Naive thymus-derived CD4-positive, alpha-beta T cell (primary cell): ENCODE measurements at regions of chr12 and their contacts with region 1.

Region 1: GRCh38 chr12:92408072-92408900 is 262.6 kb upstream of the BTG1 start:
- DNase-seq: peak in 3 of 9 donors; percentile 29 to 40 (median 30)
- ATAC-seq: peak; percentile 34
- H3K4me3 ChIP-seq: no peak overlapping the region
- H3K4me3 Mint-ChIP-seq: peak overlapping the region in 4 of 10 donors; percentile 18 to 58 (median 28)
- H3K27ac ChIP-seq: no peak overlapping the region
- H3K27ac Mint-ChIP-seq: peak overlapping the region in 8 of 9 donors; percentile 30 to 89 (median 72)
- H3K4me1 ChIP-seq: peaks cover 30 to 33% of the 10 kb centered on the region in 2 donors
- H3K4me1 Mint-ChIP-seq: peaks cover 21 to 80% (median 67%) of the 10 kb centered on the region in 7 donors
- H3K27me3 ChIP-seq: no peaks in the 10 kb centered on the region
- H3K27me3 Mint-ChIP-seq: no peaks in the 10 kb centered on the region

Region 2: GRCh38 chr12:91811481-91812287 is 596.6 kb before region 1 on chr12:
- CTCF ChIA-PET with region 1: no interaction called
- POLR2A ChIA-PET with region 1: no interaction called
- intact Hi-C with region 1: loop called in 1 of 2 experiments (anchors 10 kb)
- DNase-seq: peak; percentile 64 to 79 (median 70)
- ATAC-seq: peak; percentile 90
- H3K4me3 ChIP-seq: peak overlapping the region; percentile 37
- H3K4me3 Mint-ChIP-seq: peak overlapping the region in 9 of 10 donors; percentile 31 to 80 (median 52)
- H3K27ac ChIP-seq: peak overlapping the region; percentile 22
- H3K27ac Mint-ChIP-seq: peak overlapping the region in 8 of 9 donors; percentile 81 to 97 (median 86)
- H3K4me1 ChIP-seq: peaks cover 0 to 15% of the 10 kb centered on the region in 2 donors
- H3K4me1 Mint-ChIP-seq: peaks cover 10 to 48% (median 35%) of the 10 kb centered on the region in 7 donors
- H3K27me3 ChIP-seq: no peaks in the 10 kb centered on the region
- H3K27me3 Mint-ChIP-seq: no peaks in the 10 kb centered on the region

Region 3: DNA sequence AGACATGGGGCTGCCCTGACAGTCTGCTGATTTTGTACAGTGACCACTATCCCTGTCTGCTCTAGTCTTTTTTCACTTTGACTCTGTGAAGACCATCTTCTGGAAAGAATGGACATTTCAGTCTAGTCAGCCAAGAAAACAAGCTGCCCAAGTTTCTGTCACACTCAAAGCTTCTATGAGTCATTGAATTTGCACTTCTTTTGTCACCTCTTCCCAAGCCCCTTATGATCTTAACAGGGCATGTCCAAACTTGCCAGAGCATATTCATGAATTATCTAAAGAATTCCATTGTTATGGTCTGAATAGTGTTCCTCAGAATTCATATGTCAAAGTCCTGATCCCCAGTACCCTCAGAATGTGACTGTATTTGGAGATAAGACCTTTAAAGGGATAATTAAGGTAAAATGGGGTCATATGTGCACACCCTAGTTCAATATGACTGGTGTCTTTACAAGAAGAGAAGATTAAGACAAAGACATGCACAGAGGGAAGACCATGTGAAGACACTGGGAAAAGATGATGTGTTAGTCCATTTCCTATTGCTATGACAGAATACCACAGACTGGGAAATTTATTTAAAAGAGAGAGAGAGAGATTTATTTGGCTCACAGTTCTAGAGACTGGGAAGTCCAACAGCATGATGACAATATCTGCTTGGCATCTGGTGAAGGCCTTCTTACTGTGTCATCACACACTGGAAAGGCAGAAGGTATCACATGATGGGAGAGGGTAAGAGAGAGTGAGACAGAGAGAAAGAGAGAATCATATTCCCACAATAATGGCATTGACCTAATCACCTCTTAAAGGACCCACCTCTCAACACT is 505.2 kb before region 1 on chr12:
- CTCF ChIA-PET with region 1: no interaction called
- POLR2A ChIA-PET with region 1: no interaction called
- intact Hi-C with region 1: no loop called
- DNase-seq: no peak
- ATAC-seq: no peak
- H3K4me3 ChIP-seq: no peak overlapping the region
- H3K4me3 Mint-ChIP-seq: no peak overlapping the region
- H3K27ac ChIP-seq: no peak overlapping the region
- H3K27ac Mint-ChIP-seq: peak overlapping the region in 4 of 9 donors; percentile 20 to 31 (median 24)
- H3K4me1 ChIP-seq: no peaks in the 10 kb centered on the region
- H3K4me1 Mint-ChIP-seq: peaks cover 2 to 52% (median 37%) of the 10 kb centered on the region in 7 donors
- H3K27me3 ChIP-seq: no peaks in the 10 kb centered on the region
- H3K27me3 Mint-ChIP-seq: no peaks in the 10 kb centered on the region

Region 4: DNA sequence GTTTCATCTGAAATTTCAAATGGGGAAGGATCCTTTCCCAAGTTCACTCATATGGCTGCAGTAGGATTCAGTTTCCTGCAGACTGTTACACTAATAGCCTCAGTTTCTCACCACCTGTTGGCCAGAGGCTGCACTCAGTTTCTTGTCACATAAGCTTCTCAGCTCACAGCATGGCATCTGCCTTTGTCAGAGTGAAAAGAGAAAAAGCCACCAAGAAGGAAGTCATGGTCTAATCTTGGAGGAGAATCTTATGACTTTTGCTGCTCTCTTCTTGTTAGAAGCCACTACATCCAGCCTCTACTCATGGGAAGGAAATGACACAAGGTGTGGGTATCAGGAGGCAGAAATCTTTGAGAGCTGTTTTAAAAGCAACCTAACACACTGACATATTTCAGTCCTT is 223.2 kb before region 1 on chr12:
- CTCF ChIA-PET with region 1: no interaction called
- POLR2A ChIA-PET with region 1: no interaction called
- intact Hi-C with region 1: loop called in 1 of 2 experiments (anchors 1 kb)
- DNase-seq: peak in 8 of 9 donors; percentile 30 to 70 (median 56)
- ATAC-seq: peak; percentile 88
- H3K4me3 ChIP-seq: no peak overlapping the region
- H3K4me3 Mint-ChIP-seq: peak overlapping the region; percentile 28 to 77 (median 68)
- H3K27ac ChIP-seq: peak overlapping the region; percentile 74
- H3K27ac Mint-ChIP-seq: peak overlapping the region; percentile 83 to 96 (median 93)
- H3K4me1 ChIP-seq: peaks cover 22 to 29% of the 10 kb centered on the region in 2 donors
- H3K4me1 Mint-ChIP-seq: peaks cover 23 to 71% (median 60%) of the 10 kb centered on the region in 7 donors
- H3K27me3 ChIP-seq: no peaks in the 10 kb centered on the region
- H3K27me3 Mint-ChIP-seq: no peaks in the 10 kb centered on the region

Region 5: DNA sequence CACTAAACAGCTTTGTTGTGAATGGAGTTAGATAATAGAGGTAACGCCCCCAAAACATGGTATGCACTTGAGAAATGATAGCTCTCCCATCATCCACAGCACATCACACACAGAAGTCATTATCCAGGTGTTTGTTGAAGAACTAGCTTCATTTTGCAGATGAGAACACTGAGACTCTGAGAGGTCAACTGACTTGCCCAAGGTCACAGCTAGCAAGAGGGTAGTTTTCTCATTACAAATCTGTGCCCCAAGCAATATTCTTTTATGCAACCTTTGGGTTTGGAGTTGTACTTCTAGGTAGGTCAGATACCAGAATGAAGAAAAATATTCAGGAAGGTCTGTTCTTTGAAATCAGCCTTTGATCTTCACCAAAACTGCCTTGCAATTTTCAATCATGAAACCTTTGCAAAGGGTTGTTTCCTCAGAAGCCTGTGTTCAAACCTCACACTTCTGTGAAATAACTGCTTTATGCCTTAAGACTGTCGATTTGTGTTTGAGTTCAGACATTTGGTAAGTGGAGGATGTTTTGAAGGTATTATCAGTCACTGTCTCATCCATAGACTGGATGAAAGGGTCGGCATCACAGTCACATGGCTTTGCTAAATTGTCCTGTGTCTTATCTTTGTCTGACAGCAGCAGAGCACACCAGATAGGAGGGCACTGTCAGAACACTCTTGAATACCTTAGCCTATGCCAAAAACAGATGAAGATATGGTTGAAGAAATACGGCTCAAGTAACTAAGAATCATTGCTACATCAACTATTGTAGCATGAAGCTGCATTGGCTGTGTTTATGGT is 29.4 kb before region 1 on chr12:
- CTCF ChIA-PET with region 1: interaction called, 4 read pairs
- POLR2A ChIA-PET with region 1: interaction called, 14 read pairs
- intact Hi-C with region 1: loop called in 1 of 2 experiments (anchors 1 kb)
- DNase-seq: peak in 7 of 9 donors; percentile 44 to 73 (median 65)
- ATAC-seq: peak; percentile 90
- H3K4me3 ChIP-seq: no peak overlapping the region
- H3K4me3 Mint-ChIP-seq: peak overlapping the region; percentile 8 to 74 (median 62)
- H3K27ac ChIP-seq: peak overlapping the region; percentile 64
- H3K27ac Mint-ChIP-seq: peak overlapping the region; percentile 87 to 96 (median 93)
- H3K4me1 ChIP-seq: peaks cover 8 to 52% of the 10 kb centered on the region in 2 donors
- H3K4me1 Mint-ChIP-seq: peaks cover 31 to 91% (median 87%) of the 10 kb centered on the region in 7 donors
- H3K27me3 ChIP-seq: no peaks in the 10 kb centered on the region
- H3K27me3 Mint-ChIP-seq: no peaks in the 10 kb centered on the region

Region 6: GRCh38 chr12:92505254-92506231 is 97.3 kb after region 1 on chr12:
- CTCF ChIA-PET with region 1: interaction called, 3 read pairs
- POLR2A ChIA-PET with region 1: interaction called, 15 read pairs
- intact Hi-C with region 1: no loop called
- DNase-seq: peak; percentile 11 to 71 (median 50)
- ATAC-seq: peak; percentile 66
- H3K4me3 ChIP-seq: peak overlapping the region; percentile 48
- H3K4me3 Mint-ChIP-seq: peak overlapping the region; percentile 80 to 93 (median 87)
- H3K27ac ChIP-seq: peak overlapping the region; percentile 73
- H3K27ac Mint-ChIP-seq: peak overlapping the region; percentile 89 to 99 (median 96)
- H3K4me1 ChIP-seq: peaks cover 17 to 28% of the 10 kb centered on the region in 2 donors
- H3K4me1 Mint-ChIP-seq: peaks cover 15 to 48% (median 30%) of the 10 kb centered on the region in 7 donors
- H3K27me3 ChIP-seq: no peaks in the 10 kb centered on the region
- H3K27me3 Mint-ChIP-seq: no peaks in the 10 kb centered on the region

Region 7: DNA sequence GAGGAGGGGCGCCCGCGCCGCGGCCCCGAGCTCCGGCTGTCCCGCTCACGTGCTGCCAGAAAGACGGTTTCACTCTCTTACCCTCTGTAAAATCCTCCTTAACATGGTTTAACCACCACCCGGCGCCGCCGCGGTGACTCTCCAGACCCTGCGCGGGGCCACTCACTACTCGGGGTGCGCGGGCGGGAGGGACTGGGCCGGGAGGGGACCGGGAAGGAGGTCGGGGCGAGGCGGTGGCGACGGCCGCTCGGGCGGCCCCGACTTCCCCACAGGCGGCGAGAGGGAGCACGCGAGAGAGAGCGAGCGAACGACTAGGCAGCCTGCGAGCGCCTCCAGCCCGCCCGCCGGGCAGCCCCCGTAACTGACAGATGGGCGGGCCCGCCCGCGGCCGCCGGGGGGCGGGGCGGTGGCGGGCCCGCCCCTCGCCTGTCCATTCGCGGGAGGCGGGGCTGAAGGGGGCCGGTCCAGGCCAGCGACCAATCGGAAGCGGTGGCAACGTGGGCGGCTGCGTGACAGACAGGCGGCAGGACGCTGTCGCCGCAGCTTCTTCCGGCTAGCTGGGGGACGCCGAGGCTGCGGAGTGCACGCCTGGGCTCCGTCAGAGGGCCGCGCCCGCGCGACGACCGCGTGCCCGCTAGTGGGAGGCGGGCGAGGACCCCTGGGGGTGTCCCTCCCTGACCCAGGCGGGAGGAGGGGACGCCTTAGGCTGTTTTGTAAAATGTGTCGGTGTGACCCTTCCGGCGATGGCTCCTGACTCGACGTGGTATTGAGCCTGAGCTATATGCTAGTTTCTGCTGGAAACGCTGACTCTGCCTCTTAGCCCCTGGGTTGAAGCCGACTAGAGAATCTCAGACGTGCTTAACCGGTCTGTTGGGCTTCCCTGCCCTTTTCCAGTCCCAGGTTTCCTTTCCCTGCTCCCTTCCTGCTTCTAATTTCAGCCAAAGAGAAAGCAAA is 521.0 kb after region 1 on chr12 and contains the start of gene EEA1:
- CTCF ChIA-PET with region 1: no interaction called
- POLR2A ChIA-PET with region 1: no interaction called
- intact Hi-C with region 1: loop called in 1 of 2 experiments (anchors 5 kb)
- DNase-seq: peak; percentile 89 to 96 (median 91)
- ATAC-seq: peak; percentile 93
- H3K4me3 ChIP-seq: peak within 1 kb of the TSS; percentile 71
- H3K4me3 Mint-ChIP-seq: peak within 1 kb of the TSS; percentile 75 to 94 (median 91)
- H3K27ac ChIP-seq: peak within 1 kb of the TSS; percentile 96
- H3K27ac Mint-ChIP-seq: peak within 1 kb of the TSS; percentile 89 to 99 (median 93)
- H3K4me1 ChIP-seq: peaks cover 19 to 23% of the 10 kb centered on the region in 2 donors
- H3K4me1 Mint-ChIP-seq: peaks cover 20 to 53% (median 37%) of the 10 kb centered on the region in 7 donors
- H3K27me3 ChIP-seq: no peaks in the 10 kb centered on the region
- H3K27me3 Mint-ChIP-seq: peaks cover 0 to 6% (median 0%) of the 10 kb centered on the region in 5 donors
- total RNA-seq, gene EEA1: 20.9 to 28.3 (median 27.9) TPM